Naive thymus-derived CD4-positive, alpha-beta T cell (primary cell): ENCODE measurements at regions of chr2 and their contacts with region 1.

Region 1: GRCh38 chr2:15591692-15592463 is at the start of gene DDX1:
- DNase-seq: peak; percentile 78 to 93 (median 84)
- ATAC-seq: peak; percentile 98
- H3K4me3 ChIP-seq: peak within 1 kb of the TSS; percentile 85
- H3K4me3 Mint-ChIP-seq: peak within 1 kb of the TSS; percentile 90 to 96 (median 94)
- H3K27ac ChIP-seq: peak within 1 kb of the TSS; percentile 86
- H3K27ac Mint-ChIP-seq: peak within 1 kb of the TSS; percentile 91 to 97 (median 95)
- H3K4me1 ChIP-seq: peaks cover 0 to 5% of the 10 kb centered on the region in 2 donors
- H3K4me1 Mint-ChIP-seq: peaks cover 24 to 62% (median 53%) of the 10 kb centered on the region in 7 donors
- H3K27me3 ChIP-seq: no peaks in the 10 kb centered on the region
- H3K27me3 Mint-ChIP-seq: no peaks in the 10 kb centered on the region
- total RNA-seq, gene DDX1: 30.2 to 73.8 (median 55.3) TPM

Region 2: DNA sequence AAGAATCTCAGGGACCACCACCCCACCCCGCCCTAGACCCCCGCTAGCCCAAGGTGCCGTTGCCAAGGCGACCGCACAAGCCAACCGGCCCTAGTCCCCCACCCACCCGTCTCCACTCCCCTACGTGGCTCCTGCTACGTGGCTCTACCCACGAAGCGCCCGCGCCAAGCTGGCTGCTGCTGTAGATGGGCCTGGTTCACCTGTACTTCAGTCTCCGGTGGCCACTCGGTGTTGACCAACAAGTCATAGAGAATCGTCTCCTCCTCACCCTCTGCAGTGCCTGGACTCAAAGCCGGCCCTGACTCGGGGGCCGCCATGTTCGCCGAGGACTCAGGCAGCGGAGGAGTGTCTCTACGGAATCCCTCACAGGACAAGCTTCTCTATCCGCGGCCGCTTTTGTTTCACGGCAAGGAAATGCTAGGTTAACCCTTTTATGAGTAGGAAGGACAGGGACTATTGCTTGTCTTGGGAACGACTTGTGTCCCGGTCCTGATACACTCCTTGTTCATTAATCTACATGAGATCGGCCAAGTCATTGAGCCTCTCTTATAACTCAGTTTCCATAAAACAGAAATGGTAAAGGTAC is 30.8 kb before region 1 on chr2 and contains the start of gene NBAS:
- CTCF ChIA-PET with region 1: no interaction called
- POLR2A ChIA-PET with region 1: interaction called, 16 read pairs
- intact Hi-C with region 1: loop called (anchors 1 kb)
- DNase-seq: peak; percentile 50 to 79 (median 76)
- ATAC-seq: peak; percentile 93
- H3K4me3 ChIP-seq: peak within 1 kb of the TSS; percentile 61
- H3K4me3 Mint-ChIP-seq: peak within 1 kb of the TSS; percentile 88 to 100 (median 100)
- H3K27ac ChIP-seq: peak within 1 kb of the TSS; percentile 78
- H3K27ac Mint-ChIP-seq: peak within 1 kb of the TSS; percentile 93 to 99 (median 96)
- H3K4me1 ChIP-seq: peaks cover 4 to 17% of the 10 kb centered on the region in 2 donors
- H3K4me1 Mint-ChIP-seq: peaks cover 28 to 53% (median 45%) of the 10 kb centered on the region in 7 donors
- H3K27me3 ChIP-seq: no peaks in the 10 kb centered on the region
- H3K27me3 Mint-ChIP-seq: peaks cover 0 to 6% (median 0%) of the 10 kb centered on the region in 5 donors
- total RNA-seq, gene NBAS: 32.6 to 41.6 (median 36.4) TPM

Region 3: GRCh38 chr2:15610430-15610952 is 18.6 kb after region 1 on chr2:
- CTCF ChIA-PET with region 1: no interaction called
- POLR2A ChIA-PET with region 1: no interaction called
- intact Hi-C with region 1: no loop called
- DNase-seq: no peak
- ATAC-seq: no peak
- H3K4me3 ChIP-seq: no peak overlapping the region
- H3K4me3 Mint-ChIP-seq: no peak overlapping the region
- H3K27ac ChIP-seq: no peak overlapping the region
- H3K27ac Mint-ChIP-seq: peak overlapping the region in 2 of 9 donors; percentile 34 to 82
- H3K4me1 ChIP-seq: no peaks in the 10 kb centered on the region
- H3K4me1 Mint-ChIP-seq: peaks cover 0 to 15% (median 2%) of the 10 kb centered on the region in 7 donors
- H3K27me3 ChIP-seq: no peaks in the 10 kb centered on the region
- H3K27me3 Mint-ChIP-seq: no peaks in the 10 kb centered on the region